GM12878 (cell line): ENCODE measurements at regions of chr6 and their contacts with region 1.

Region 1: DNA sequence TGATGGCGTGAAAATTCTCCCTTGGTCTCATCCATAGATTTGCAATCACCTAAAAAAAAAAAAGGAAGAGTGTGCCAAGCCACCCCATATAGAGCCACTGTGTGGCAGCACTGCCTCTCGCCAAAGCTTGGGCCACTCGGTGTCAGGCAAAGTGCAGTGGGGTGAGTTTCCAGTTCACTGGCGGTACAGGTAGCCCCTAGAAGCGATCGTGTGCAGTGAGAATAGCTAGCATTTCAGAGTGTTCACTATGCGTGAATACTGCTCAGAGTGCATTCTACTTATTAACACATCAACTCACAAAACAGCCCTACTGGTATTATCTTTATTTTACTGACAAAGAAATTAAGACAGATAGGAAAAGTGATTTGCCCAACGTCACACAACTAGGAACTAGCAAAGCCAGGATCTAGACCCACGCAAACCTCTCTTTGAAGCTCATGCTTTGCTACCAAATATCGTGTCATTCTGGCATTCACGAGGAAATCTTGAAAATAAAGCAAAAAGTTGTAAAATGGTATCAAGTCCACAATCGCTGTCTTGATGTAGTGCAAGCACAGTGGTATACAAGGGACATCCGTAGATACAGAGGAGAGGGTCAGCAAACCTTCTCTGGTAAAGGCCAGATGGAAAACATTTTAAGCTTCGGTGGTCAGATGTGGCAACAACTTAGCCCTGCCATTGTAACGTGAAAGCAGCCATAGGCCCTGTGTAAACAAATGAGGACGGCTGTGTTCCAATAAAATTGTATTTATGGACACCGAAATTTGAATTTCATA is 10.4 kb upstream of the GCNT2 start:
- DNase-seq: no peak
- ATAC-seq: peak; percentile 100
- H3K4me3 ChIP-seq: no peak overlapping the region
- H3K27ac ChIP-seq: no peak overlapping the region
- H3K4me1 ChIP-seq: no peaks in the 10 kb centered on the region
- H3K27me3 ChIP-seq: no peaks in the 10 kb centered on the region
- CTCF ChIP-seq: peak; percentile 84 to 97 (median 84)
- EP300 ChIP-seq: no peak
- POLR2A ChIP-seq: no peak
- RAD21 ChIP-seq: peak; percentile 99

Region 2: GRCh38 chr6:10478187-10479040 is 32.4 kb before region 1 on chr6:
- CTCF ChIA-PET with region 1: interaction called, 52 read pairs
- POLR2A ChIA-PET with region 1: no interaction called
- RAD21 ChIA-PET with region 1: interaction called, 5 read pairs
- SMC1A ChIA-PET with region 1: interaction called, 11 read pairs
- in situ Hi-C with region 1: no loop called
- intact Hi-C with region 1: no loop called
- DNase-seq: no peak
- ATAC-seq: peak; percentile 87
- H3K4me3 ChIP-seq: no peak overlapping the region
- H3K27ac ChIP-seq: no peak overlapping the region
- H3K4me1 ChIP-seq: no peaks in the 10 kb centered on the region
- H3K27me3 ChIP-seq: no peaks in the 10 kb centered on the region; a peak in 2 of 4 replicates
- CTCF ChIP-seq: peak; percentile 55 to 65 (median 62); a peak in 5 of 6 replicates
- EP300 ChIP-seq: no peak
- POLR2A ChIP-seq: no peak
- RAD21 ChIP-seq: peak; percentile 81

Region 3: GRCh38 chr6:10528170-10528981 is 17.6 kb after region 1 on chr6:
- CTCF ChIA-PET with region 1: interaction called, 8 read pairs
- POLR2A ChIA-PET with region 1: interaction called, 4 read pairs
- RAD21 ChIA-PET with region 1: interaction called, 5 read pairs
- SMC1A ChIA-PET with region 1: interaction called, 16 read pairs
- in situ Hi-C with region 1: no loop called
- intact Hi-C with region 1: no loop called
- DNase-seq: peak; percentile 72
- ATAC-seq: peak; percentile 66
- H3K4me3 ChIP-seq: peak overlapping the region; percentile 82
- H3K27ac ChIP-seq: peak overlapping the region; percentile 73
- H3K4me1 ChIP-seq: peaks cover 6% of the 10 kb centered on the region
- H3K27me3 ChIP-seq: no peaks in the 10 kb centered on the region
- CTCF ChIP-seq: 0 out of 6 replicates have a peak, but pooled peaks of 1 of the 3 experiments have one; percentile 8
- EP300 ChIP-seq: peak; percentile 7 to 24; a peak in 2 of 4 replicates
- POLR2A ChIP-seq: peak; percentile 65
- RAD21 ChIP-seq: peak; percentile 12; the same call in 1 of the 2 replicates

Region 4: GRCh38 chr6:10694302-10695085 is 183.7 kb after region 1 on chr6 and contains the starts of genes C6orf52 and PAK1IP1:
- CTCF ChIA-PET with region 1: interaction called, 11 read pairs
- POLR2A ChIA-PET with region 1: no interaction called
- RAD21 ChIA-PET with region 1: interaction called, 4 read pairs
- SMC1A ChIA-PET with region 1: interaction called, 7 read pairs
- in situ Hi-C with region 1: no loop called
- intact Hi-C with region 1: loop called (anchors 1 kb)
- DNase-seq: peak; percentile 88
- ATAC-seq: peak; percentile 97
- H3K4me3 ChIP-seq: peak within 1 kb of the TSS; percentile 73
- H3K27ac ChIP-seq: peak within 1 kb of the TSS; percentile 96
- H3K4me1 ChIP-seq: peaks cover 7% of the 10 kb centered on the region
- H3K27me3 ChIP-seq: no peaks in the 10 kb centered on the region
- CTCF ChIP-seq: no peak
- EP300 ChIP-seq: 0 out of 4 replicates have a peak, but pooled peaks of 1 of the 2 experiments have one; percentile 60
- POLR2A ChIP-seq: peak; percentile 93
- RAD21 ChIP-seq: no peak
- polyA plus RNA-seq, gene C6orf52: 13.1 to 15.1 TPM
- polyA plus RNA-seq, gene PAK1IP1: 86.1 to 98.5 TPM

Region 5: GRCh38 chr6:10747251-10747972 is 236.6 kb after region 1 on chr6 and contains the start of gene TMEM14B:
- CTCF ChIA-PET with region 1: interaction called, 3 read pairs
- POLR2A ChIA-PET with region 1: no interaction called
- RAD21 ChIA-PET with region 1: interaction called, 5 read pairs
- SMC1A ChIA-PET with region 1: interaction called, 9 read pairs
- in situ Hi-C with region 1: no loop called
- intact Hi-C with region 1: loop called (anchors 5 kb)
- DNase-seq: peak; percentile 90
- ATAC-seq: peak; percentile 98
- H3K4me3 ChIP-seq: peak within 1 kb of the TSS; percentile 87
- H3K27ac ChIP-seq: peak within 1 kb of the TSS; percentile 69
- H3K4me1 ChIP-seq: peaks cover 5% of the 10 kb centered on the region; the same call in 1 of the 2 replicates
- H3K27me3 ChIP-seq: no peaks in the 10 kb centered on the region
- CTCF ChIP-seq: no peak
- EP300 ChIP-seq: no peak
- POLR2A ChIP-seq: peak; percentile 94
- RAD21 ChIP-seq: no peak
- polyA plus RNA-seq, gene TMEM14B: 366 to 399 TPM

Region 6: DNA sequence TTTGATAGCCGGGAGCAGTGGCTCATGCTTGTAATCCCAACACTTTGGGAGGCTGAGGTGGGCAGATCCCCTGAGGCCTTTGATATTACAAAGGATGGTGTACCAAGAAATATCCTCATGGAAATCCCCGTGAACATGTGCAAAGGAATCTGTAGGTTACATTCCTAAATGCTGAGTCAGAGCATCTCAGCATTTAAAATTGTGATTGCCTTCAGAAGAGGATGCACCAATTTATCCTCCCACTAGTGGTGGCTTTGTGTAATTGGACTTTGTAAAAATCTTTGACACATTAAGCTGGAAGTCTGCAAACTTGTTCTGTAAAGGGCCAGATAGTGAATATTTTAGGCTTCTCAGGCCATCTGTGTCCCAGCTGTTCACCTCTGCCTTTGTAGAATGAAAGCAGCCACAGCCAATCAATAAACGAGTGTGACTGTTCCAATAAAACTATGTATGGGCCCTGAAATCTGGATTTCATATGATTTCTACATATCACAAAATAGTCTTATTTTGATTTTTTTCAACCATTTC is 248.6 kb after region 1 on chr6:
- CTCF ChIA-PET with region 1: interaction called, 7 read pairs
- POLR2A ChIA-PET with region 1: no interaction called
- RAD21 ChIA-PET with region 1: no interaction called
- SMC1A ChIA-PET with region 1: interaction called, 7 read pairs
- in situ Hi-C with region 1: no loop called
- intact Hi-C with region 1: loop called (anchors 1 kb)
- DNase-seq: no peak
- ATAC-seq: peak; percentile 88
- H3K4me3 ChIP-seq: no peak overlapping the region
- H3K27ac ChIP-seq: no peak overlapping the region
- H3K4me1 ChIP-seq: no peaks in the 10 kb centered on the region
- H3K27me3 ChIP-seq: no peaks in the 10 kb centered on the region
- CTCF ChIP-seq: peak; percentile 41 to 58 (median 44); a peak in 5 of 6 replicates
- EP300 ChIP-seq: no peak
- POLR2A ChIP-seq: no peak
- RAD21 ChIP-seq: peak; percentile 46

Region 7: DNA sequence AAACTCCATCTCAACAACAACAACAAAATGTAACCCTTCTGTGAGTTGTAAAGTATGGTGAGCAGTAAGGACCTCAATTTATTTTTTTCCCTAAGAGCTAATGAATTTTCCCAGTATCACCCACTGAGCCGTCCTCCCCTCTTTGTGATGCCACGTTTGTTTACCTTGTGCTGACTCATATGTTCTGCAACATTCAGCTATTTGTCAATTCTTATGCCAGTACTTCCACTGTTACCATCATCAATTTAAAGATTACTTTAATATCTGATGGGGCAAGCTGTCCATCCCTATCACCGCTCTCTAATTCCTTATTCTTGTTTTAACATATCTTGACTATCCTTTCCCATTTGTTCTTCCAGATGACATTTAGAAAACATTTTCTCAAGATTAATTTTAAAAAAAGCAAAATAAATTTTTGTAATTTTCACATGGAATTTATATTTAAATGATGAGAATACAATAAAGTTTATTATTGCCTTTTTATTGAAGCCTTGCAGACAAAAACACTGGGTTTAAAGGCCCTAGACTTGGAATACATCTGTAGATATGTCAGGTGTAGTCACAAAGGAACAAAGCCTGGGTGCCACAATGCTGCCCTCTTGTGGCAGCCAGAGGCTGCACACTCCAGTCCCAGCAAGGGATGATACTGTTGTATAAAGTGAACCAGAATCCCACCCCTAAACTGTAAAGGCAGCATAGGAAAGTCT is 290.2 kb after region 1 on chr6:
- CTCF ChIA-PET with region 1: interaction called, 67 read pairs
- POLR2A ChIA-PET with region 1: no interaction called
- RAD21 ChIA-PET with region 1: interaction called, 7 read pairs
- SMC1A ChIA-PET with region 1: interaction called, 10 read pairs
- in situ Hi-C with region 1: loop called (anchors 5 kb)
- intact Hi-C with region 1: loop called (anchors 1 kb)
- DNase-seq: no peak
- ATAC-seq: peak; percentile 100
- H3K4me3 ChIP-seq: no peak overlapping the region
- H3K27ac ChIP-seq: no peak overlapping the region
- H3K4me1 ChIP-seq: no peaks in the 10 kb centered on the region
- H3K27me3 ChIP-seq: no peaks in the 10 kb centered on the region
- CTCF ChIP-seq: peak; percentile 98 to 99 (median 99); a peak in 5 of 6 replicates
- EP300 ChIP-seq: no peak
- POLR2A ChIP-seq: no peak
- RAD21 ChIP-seq: peak; percentile 94